Cardiac septum (tissue), 1 donor: ENCODE measurements at regions of chr5 and their contacts with region 1.

Region 1: GRCh38 chr5:168987543-168988300 is 313.2 kb downstream of the SLIT3 start:
- DNase-seq: no peak

Region 2: DNA sequence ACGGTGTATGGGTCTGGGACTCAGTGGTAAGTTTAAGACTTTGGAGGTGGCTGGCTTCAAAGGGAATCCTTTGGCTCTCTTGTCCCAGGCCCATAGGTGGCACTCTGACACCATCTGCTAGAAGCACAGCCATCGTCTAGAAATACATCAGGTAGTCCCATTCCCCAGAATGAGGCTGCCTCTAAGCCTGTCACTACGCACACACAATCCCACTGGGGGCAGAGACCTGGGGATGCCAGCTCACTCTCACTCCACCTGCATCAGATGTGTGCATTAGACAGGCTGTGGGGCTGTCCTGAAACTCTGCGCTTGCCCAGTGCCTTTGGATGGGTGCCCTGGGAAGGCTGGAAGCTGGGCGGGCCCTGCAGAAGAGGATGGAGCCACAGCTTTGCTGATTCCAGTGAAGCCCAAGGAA is 281.1 kb before region 1 on chr5:
- intact Hi-C with region 1: loop called (anchors 5 kb)
- DNase-seq: no peak

Region 3: GRCh38 chr5:169029661-169030274 is 42.0 kb after region 1 on chr5:
- intact Hi-C with region 1: no loop called
- DNase-seq: no peak

Region 4: GRCh38 chr5:169054506-169054905 is 66.8 kb after region 1 on chr5:
- intact Hi-C with region 1: no loop called
- DNase-seq: no peak

Region 5: DNA sequence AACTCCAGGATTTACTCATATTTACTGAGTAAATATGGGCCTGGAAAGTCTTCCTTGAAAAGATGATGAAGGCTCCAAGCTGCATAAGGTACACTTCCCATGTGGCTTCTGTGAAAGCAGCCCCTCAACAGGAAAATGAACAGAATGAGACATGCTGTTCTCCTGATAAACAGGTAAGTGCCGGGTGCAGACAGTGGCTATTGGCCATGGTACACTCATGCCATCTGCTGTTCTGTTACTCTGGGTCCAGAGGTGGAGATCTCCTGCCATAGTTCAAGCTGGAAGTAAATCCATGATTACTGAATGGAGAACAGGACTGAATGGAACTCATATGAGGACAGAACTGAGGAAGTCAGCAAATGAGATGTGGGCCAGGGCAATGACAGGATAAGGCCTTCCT is 209.6 kb after region 1 on chr5:
- intact Hi-C with region 1: loop called (anchors 5 kb)
- DNase-seq: no peak

Region 6: GRCh38 chr5:169302491-169303118 is 314.9 kb after region 1 on chr5:
- intact Hi-C with region 1: loop called (anchors 5 kb)
- DNase-seq: no peak

Region 7: GRCh38 chr5:169548315-169548714 is 560.6 kb after region 1 on chr5:
- intact Hi-C with region 1: loop called (anchors 10 kb)
- DNase-seq: no peak

Region 8: DNA sequence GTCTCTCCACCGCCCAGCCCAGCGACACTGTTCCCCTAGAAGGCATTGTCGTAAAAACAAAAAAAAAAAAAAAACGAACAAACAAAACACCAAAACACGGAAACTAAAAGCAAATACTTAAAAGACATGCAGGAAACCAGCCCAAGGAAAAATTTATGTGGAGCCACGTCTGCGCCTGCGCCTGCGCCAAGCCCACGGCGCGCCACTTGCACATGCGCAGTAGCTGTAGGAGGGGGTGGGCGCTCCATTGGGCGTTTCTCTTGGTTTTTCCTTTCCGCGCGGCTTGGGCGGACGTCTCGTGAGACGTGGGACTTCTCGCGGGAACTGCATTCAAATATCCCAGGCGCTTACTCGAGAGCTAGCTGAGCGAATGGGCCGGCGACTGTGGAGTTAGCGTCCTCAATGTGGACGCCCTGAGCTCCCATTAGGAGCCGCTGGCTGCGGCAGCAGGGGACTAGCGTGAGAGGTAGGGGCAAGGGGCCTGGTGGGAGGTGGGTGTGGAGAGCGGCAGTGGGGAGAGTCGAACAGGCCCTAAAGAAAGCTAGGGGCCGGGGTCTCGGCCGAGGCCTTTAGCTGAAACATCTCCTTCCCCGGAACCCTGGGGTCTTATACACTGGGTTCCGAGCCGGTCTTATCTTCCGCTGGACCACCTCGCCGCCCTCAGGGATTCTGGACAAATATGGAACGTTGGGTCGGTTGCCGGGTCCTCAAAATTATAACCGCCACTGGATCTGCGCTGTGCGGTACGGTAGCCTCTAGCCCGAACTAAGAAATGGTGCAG is 595.9 kb after region 1 on chr5 and contains the start of gene SPDL1:
- intact Hi-C with region 1: loop called (anchors 5 kb)
- DNase-seq: peak; percentile 97
- total RNA-seq, gene SPDL1: 4.6 TPM